ENCODE measurements at regions of chr3 and their contacts with region 1.

Region 1: GRCh38 chr3:100629421-100630127 is 20.2 kb downstream of the ADGRG7 start:
- DNase-seq: no peak
- H3K4me3 ChIP-seq: no peak overlapping the region
- H3K27ac ChIP-seq: no peak overlapping the region
- H3K4me1 ChIP-seq: no peaks in the 10 kb centered on the region
- H3K27me3 ChIP-seq: no peaks in the 10 kb centered on the region
- CTCF ChIP-seq: no peak
- EP300 ChIP-seq: no peak
- POLR2A ChIP-seq: no peak

Region 2: DNA sequence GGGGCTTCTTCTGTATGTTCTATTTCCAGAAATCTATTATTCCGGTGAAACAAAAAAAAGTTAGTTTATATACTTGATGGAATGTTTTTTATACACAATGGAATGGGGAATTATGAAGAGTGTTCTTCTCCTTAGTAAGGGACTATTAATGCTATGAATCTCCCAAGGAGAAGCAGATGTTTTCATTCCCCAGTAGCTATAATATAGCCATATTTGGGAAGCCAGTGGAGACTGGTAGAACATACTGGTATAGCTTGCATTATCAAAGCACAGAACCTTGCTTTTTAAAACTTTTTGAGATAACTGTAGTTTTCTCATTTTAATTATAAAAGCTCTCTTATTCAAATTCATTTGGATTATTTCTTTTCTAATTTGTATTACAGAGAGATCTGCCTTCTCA is 18.1 kb after region 1 on chr3:
- in situ Hi-C with region 1: no loop called
- intact Hi-C with region 1: loop called (anchors 1 kb)
- DNase-seq: no peak
- H3K4me3 ChIP-seq: no peak overlapping the region
- H3K27ac ChIP-seq: no peak overlapping the region
- H3K4me1 ChIP-seq: peaks cover 0 to 3% (median 0%) of the 10 kb centered on the region in 4 donors
- H3K27me3 ChIP-seq: no peaks in the 10 kb centered on the region
- CTCF ChIP-seq: no peak
- EP300 ChIP-seq: no peak
- POLR2A ChIP-seq: no peak

Region 3: DNA sequence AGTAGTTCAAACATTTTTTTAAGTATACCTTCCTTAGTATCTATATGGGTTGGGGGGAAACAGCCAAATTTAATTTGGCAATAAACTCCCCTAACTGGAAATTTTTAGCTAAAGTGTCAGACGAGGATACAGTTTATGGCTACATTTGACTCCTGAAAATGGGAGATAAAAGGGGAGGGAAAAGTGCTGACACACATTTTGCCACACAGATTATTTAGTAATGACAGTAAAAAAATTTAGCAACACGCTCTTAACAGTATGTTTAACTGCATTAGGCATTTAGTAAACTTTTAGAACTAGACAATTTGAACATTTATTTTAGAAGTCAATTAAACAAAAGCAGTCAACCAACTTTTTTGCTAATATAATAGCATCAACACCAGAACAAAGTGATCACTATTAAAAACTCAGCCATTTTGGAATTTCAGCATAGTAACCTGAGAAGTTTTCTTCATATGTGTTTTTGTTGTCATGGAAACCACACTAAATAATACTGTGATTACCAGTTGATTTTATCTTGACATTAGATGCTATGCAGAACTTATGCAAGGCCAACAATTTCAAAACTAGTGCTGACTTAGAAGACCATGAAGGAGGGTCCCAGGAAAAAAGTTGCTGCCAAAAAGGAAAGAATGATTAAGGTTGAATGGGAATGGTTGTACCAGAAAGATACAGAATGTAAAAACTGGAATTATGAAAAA is 32.7 kb after region 1 on chr3:
- in situ Hi-C with region 1: no loop called
- intact Hi-C with region 1: no loop called
- DNase-seq: no peak
- H3K4me3 ChIP-seq: no peak overlapping the region
- H3K27ac ChIP-seq: no peak overlapping the region
- H3K4me1 ChIP-seq: no peaks in the 10 kb centered on the region
- H3K27me3 ChIP-seq: no peaks in the 10 kb centered on the region
- CTCF ChIP-seq: no peak
- EP300 ChIP-seq: no peak
- POLR2A ChIP-seq: no peak

Region 4: GRCh38 chr3:100947119-100947518 is 317.5 kb after region 1 on chr3:
- in situ Hi-C with region 1: no loop called
- intact Hi-C with region 1: no loop called
- DNase-seq: no peak
- H3K4me3 ChIP-seq: no peak overlapping the region
- H3K27ac ChIP-seq: no peak overlapping the region
- H3K4me1 ChIP-seq: no peaks in the 10 kb centered on the region
- H3K27me3 ChIP-seq: no peaks in the 10 kb centered on the region
- CTCF ChIP-seq: no peak
- EP300 ChIP-seq: no peak
- POLR2A ChIP-seq: no peak